HepG2 (cell line): ENCODE measurements at regions of chr3 and their contacts with region 1.

Region 1: DNA sequence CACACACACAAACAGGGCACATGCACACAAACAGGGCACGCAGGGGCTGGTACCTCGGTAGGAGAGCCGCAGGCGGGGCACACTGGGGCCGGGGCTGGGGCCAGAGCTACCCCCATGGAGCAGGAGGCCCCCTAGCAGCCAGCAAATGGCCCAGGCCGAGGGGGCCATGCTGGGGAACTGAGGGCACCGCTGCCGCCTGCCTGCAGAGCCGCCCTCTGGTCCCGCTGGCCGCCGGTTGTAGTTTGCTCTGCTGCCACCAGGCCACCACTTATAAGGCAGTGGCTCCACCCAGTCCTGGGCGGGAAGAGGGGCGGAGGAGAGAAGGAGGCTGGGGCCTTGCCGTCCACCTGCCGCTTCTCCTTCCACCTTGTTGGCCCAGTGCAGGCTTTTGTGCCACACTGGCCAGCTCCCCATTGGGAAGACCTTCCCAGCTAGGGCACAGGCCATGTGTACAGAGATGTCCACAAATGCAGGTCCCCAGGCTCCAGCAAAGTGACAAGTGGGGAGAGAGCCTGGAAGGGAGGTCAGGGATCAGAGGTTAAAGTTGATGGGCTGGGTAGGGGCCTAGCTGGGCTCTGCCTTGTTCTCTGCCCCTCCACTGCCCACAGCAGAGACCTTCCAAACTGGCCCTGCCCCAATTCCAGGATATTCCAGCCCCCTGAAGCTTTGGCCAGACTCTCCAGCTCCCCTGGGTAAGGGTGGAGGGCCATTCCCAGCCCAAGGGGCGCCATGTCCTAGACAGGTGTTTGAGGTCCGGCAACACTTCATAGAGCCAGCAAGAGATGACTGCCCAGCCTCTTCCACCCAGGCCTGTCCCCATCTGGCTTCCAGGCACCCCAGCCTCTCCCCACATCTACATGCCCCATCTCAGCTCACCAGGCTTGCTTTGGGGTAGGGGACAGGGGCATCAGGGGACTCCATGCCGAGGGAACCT is at the start of gene SEMA3G:
- DNase-seq: peak; percentile 76
- ATAC-seq: peak; percentile 92
- H3K4me3 ChIP-seq: peak within 1 kb of the TSS; percentile 52 to 79 (median 78)
- H3K27ac ChIP-seq: peak within 1 kb of the TSS; percentile 31
- H3K4me1 ChIP-seq: peaks cover 78% of the 10 kb centered on the region
- H3K27me3 ChIP-seq: no peaks in the 10 kb centered on the region
- CTCF ChIP-seq: peak; percentile 68
- EP300 ChIP-seq: no peak
- POLR2A ChIP-seq: peak in 1 of 2 experiments; percentile 88; a peak in 2 of 4 replicates
- RAD21 ChIP-seq: peak; percentile 40; the same call in 1 of the 2 replicates
- total RNA-seq, gene SEMA3G: 2.0 and 6.1 TPM in 2 replicates

Region 2: DNA sequence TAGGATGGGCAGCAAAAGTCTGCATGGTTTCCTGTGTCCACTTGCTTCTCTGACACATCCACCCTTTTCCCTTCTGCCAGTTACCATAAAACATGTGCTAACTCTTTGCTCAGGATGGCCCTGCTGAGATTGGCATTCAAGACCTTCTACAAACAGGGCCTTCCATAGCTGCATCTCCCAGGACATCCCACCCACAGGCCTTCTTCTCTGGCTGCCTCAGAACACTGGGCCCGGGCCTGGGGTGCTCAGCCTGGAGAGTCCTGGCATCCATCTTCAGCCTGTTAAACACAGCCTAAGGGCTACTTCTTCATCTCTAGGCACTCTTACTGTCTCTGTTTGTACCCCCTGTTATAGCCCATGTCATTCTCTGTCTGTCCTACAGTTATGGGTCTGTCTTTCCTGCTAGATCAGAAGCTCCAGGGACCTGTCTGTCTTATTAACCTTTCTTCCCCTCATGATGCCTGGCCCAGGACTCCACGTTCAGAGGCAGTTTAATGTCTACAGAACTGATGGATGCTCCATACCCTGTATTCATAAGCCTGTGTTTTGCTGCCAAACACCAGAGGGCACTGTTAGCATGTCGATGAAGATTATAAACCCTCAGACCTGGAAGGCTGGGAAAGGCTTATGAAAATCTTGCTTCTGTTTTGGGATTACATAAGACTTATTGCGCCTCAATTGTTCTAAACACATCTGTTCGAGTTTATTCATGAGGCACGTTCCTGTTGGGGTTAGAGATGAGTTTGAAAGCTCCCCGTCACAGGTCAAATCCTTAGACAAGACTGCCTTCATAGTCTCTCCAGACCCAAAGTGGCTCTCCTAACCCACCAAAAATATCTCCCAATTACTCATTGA is 16.7 kb before region 1 on chr3:
- CTCF ChIA-PET with region 1: interaction called, 83 read pairs
- POLR2A ChIA-PET with region 1: interaction called, 14 read pairs
- in situ Hi-C with region 1: no loop called
- intact Hi-C with region 1: loop called (anchors 1 kb)
- DNase-seq: peak; percentile 76
- ATAC-seq: peak; percentile 64
- H3K4me3 ChIP-seq: no peak overlapping the region
- H3K27ac ChIP-seq: no peak overlapping the region
- H3K4me1 ChIP-seq: peaks cover 69% of the 10 kb centered on the region
- H3K27me3 ChIP-seq: no peaks in the 10 kb centered on the region
- CTCF ChIP-seq: peak; percentile 92
- EP300 ChIP-seq: no peak
- POLR2A ChIP-seq: no peak
- RAD21 ChIP-seq: peak; percentile 73

Region 3: DNA sequence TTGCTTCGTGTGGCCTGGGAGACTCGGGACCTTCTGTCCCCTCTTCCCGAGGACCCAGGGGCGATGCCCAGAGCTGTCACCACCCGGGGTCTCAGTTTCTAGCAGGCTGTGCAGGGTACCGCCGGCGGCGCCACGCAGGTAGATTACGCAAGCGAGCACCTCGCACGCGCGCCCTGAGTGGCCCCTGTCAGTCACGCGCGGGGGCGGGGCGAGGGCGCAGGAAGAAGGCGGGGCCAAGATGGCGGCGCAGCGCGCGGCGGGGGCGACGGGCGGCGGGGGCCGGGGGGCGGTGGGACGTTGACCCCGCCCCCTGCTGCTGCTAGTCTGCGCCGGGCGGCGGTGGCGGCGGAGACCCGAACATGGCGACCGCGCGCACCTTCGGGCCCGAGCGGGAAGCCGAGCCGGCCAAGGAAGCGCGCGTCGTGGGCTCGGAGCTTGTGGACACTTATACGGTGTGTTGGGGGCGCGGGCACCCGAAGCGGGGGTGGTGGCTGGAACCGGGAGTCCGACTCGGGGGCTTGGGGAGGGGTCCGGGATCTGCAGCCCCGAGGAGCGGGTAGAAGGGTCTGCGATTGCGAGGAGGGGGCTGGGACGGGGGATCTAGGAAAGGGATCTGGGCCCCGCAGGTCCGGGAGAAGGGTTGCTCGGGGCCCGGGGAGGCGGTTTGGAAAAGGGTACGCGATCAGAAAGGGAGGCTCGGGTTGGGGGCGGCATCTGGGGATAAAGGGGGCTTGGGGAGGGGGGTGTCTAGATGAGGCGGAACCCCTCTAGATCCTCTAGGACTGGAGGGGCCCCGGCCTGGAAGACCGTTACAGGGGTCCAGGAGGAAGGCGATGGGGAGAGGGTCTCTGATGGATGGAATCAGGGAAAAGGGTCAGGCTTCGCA is 10.4 kb after region 1 on chr3 and contains the start of gene NISCH:
- CTCF ChIA-PET with region 1: no interaction called
- POLR2A ChIA-PET with region 1: interaction called, 11 read pairs
- in situ Hi-C with region 1: no loop called
- intact Hi-C with region 1: no loop called
- DNase-seq: peak; percentile 58
- ATAC-seq: peak; percentile 38
- H3K4me3 ChIP-seq: peak within 1 kb of the TSS; percentile 90 to 96 (median 92)
- H3K27ac ChIP-seq: peak within 1 kb of the TSS; percentile 63
- H3K4me1 ChIP-seq: peaks cover 64% of the 10 kb centered on the region
- H3K27me3 ChIP-seq: no peaks in the 10 kb centered on the region; a peak in 1 of 5 replicates
- CTCF ChIP-seq: peak; percentile 26; the same call in 1 of the 2 replicates
- EP300 ChIP-seq: peak in 1 of 2 experiments; percentile 64; a peak in 2 of 4 replicates
- POLR2A ChIP-seq: peak in 1 of 2 experiments; percentile 52; a peak in 1 of 4 replicates
- RAD21 ChIP-seq: no peak
- total RNA-seq, gene NISCH: 15.3 and 27.0 TPM in 2 replicates

Region 4: GRCh38 chr3:52468336-52468735 is 23.2 kb after region 1 on chr3:
- CTCF ChIA-PET with region 1: no interaction called
- POLR2A ChIA-PET with region 1: no interaction called
- in situ Hi-C with region 1: no loop called
- intact Hi-C with region 1: no loop called
- DNase-seq: no peak
- ATAC-seq: no peak
- H3K4me3 ChIP-seq: no peak overlapping the region
- H3K27ac ChIP-seq: no peak overlapping the region
- H3K4me1 ChIP-seq: peaks cover 9% of the 10 kb centered on the region; the same call in 1 of the 2 replicates
- H3K27me3 ChIP-seq: no peaks in the 10 kb centered on the region
- CTCF ChIP-seq: no peak
- EP300 ChIP-seq: no peak
- POLR2A ChIP-seq: no peak
- RAD21 ChIP-seq: no peak

Region 5: DNA sequence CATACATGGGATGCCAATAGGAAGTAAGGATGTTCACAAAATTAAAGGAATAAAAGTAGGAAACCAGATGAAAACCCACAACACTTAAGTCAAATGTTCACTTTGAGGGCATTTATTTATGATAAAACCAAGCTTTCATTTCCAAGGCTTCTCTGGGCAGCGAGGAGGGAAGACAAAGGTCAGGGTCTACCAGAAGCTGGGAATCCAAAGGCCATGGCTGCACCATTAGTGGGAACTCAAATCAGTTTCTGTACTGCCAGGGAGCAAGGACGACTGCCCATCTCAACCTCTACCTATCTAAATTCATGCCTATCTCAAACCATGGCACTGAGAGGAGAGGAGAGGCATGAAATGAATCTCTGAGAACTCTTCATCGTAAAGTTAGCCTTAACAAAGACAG is 218.0 kb after region 1 on chr3:
- CTCF ChIA-PET with region 1: no interaction called
- POLR2A ChIA-PET with region 1: no interaction called
- in situ Hi-C with region 1: no loop called
- intact Hi-C with region 1: no loop called
- DNase-seq: no peak
- ATAC-seq: no peak
- H3K4me3 ChIP-seq: no peak overlapping the region
- H3K27ac ChIP-seq: no peak overlapping the region
- H3K4me1 ChIP-seq: peaks cover 5% of the 10 kb centered on the region; the same call in 1 of the 2 replicates
- H3K27me3 ChIP-seq: no peaks in the 10 kb centered on the region
- CTCF ChIP-seq: no peak
- EP300 ChIP-seq: no peak
- POLR2A ChIP-seq: no peak
- RAD21 ChIP-seq: no peak

Region 6: DNA sequence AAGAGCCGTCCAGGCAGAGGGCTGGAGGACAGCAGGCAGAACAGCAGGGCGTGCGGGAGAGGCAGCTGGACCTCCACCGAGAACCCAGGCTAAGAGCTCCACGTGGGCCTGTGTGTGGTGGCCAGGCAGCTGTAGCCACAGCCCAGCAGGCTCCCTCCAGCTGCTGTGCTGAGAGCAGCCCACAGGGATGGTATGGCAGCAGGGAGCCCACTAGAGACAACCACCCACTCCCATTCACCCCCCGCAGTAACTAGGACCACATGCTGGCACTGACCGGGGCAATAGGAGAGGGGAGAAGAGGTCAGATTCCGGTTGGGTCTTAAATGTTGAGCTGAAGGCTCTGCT is 415.3 kb after region 1 on chr3:
- CTCF ChIA-PET with region 1: no interaction called
- POLR2A ChIA-PET with region 1: no interaction called
- in situ Hi-C with region 1: no loop called
- intact Hi-C with region 1: no loop called
- DNase-seq: no peak
- ATAC-seq: no peak; the same call in 2 of the 3 replicates
- H3K4me3 ChIP-seq: no peak overlapping the region
- H3K27ac ChIP-seq: no peak overlapping the region
- H3K4me1 ChIP-seq: no peaks in the 10 kb centered on the region
- H3K27me3 ChIP-seq: no peaks in the 10 kb centered on the region
- CTCF ChIP-seq: no peak
- EP300 ChIP-seq: no peak
- POLR2A ChIP-seq: no peak
- RAD21 ChIP-seq: no peak